HCT116 (cell line): ENCODE measurements at regions of chr3 and their contacts with region 1.

Region 1: GRCh38 chr3:50401978-50402595 is 42.8 kb upstream of the TMEM115 start:
- DNase-seq: no peak
- ATAC-seq: peak; percentile 55
- H3K4me3 ChIP-seq: no peak overlapping the region
- H3K27ac ChIP-seq: no peak overlapping the region; the same call in 1 of the 2 replicates
- H3K4me1 ChIP-seq: peaks cover 15 to 19% of the 10 kb centered on the region in 2 experiments
- H3K27me3 ChIP-seq: no peaks in the 10 kb centered on the region; the same call in 1 of the 2 replicates
- CTCF ChIP-seq: no peak
- POLR2A ChIP-seq: no peak
- RAD21 ChIP-seq: no peak

Region 2: DNA sequence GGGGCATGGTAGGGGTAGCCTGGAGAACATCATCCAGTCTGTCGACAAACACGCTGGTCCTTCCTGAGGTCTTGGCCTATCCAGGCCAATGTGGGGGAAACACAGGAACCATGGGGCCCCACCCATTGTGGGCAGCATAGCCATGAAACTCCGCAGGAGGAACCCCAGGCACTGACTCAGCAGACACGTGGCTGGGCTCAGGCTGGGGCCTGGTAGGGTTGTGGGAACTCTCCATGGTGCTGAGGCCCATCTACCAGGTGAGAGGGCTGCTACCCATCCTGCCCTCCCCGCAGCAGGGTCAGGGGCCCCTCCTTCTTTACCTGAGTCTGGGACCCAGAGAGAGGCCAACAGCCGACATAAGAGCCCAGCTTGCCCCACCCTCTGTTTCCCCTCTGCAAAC is 123.9 kb after region 1 on chr3:
- CTCF ChIA-PET with region 1: no interaction called
- POLR2A ChIA-PET with region 1: no interaction called
- RAD21 ChIA-PET with region 1: no interaction called
- intact Hi-C with region 1: loop called (anchors 5 kb)
- DNase-seq: peak; percentile 22
- ATAC-seq: peak; percentile 85
- H3K4me3 ChIP-seq: no peak overlapping the region
- H3K27ac ChIP-seq: no peak overlapping the region
- H3K4me1 ChIP-seq: peaks cover 0 to 4% of the 10 kb centered on the region in 2 experiments; a peak in 2 of 4 replicates
- H3K27me3 ChIP-seq: peaks cover 7% of the 10 kb centered on the region; the same call in 1 of the 2 replicates
- CTCF ChIP-seq: no peak
- POLR2A ChIP-seq: no peak
- RAD21 ChIP-seq: no peak

Region 3: DNA sequence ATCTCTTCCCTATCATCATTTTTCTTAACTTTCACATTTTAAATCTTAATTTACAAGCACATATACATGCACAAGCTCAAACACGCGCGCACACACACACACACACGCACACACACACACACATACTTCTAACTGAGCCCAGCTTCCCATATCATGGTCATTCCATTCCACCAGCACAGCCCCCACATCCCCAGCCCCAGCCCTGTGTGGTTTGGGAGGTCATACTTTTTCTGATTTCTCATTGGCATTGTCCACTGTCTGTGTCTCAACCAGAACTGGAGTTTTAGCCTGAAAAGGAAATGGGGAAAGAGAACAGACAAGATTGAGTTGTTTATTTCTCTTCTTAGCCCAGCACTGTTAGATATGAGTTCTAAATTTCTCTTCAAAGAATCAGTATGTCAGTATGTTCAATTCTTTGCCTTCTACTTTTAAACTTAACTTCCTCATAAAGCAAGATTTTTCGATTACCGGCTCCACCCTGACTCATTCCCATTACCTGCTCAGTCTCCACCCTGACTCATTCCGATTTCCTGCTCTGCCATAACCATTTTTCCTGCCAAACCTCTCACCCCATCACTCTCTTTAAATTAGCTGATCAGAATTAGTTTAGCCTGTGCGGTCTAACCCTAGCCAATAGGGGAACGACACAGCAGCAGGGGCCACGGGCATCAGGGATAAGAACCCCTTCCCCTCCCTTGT is 1494.7 kb after region 1 on chr3:
- CTCF ChIA-PET with region 1: no interaction called
- POLR2A ChIA-PET with region 1: no interaction called
- RAD21 ChIA-PET with region 1: no interaction called
- intact Hi-C with region 1: no loop called
- DNase-seq: no peak
- ATAC-seq: peak; percentile 56
- H3K4me3 ChIP-seq: peak overlapping the region; percentile 41 to 56
- H3K27ac ChIP-seq: peak overlapping the region; percentile 30
- H3K4me1 ChIP-seq: peaks cover 5 to 34% of the 10 kb centered on the region in 2 experiments
- H3K27me3 ChIP-seq: no peaks in the 10 kb centered on the region
- CTCF ChIP-seq: no peak
- POLR2A ChIP-seq: no peak
- RAD21 ChIP-seq: no peak